ENCODE measurements at regions of chr14 and their contacts with region 1.

Region 1: DNA sequence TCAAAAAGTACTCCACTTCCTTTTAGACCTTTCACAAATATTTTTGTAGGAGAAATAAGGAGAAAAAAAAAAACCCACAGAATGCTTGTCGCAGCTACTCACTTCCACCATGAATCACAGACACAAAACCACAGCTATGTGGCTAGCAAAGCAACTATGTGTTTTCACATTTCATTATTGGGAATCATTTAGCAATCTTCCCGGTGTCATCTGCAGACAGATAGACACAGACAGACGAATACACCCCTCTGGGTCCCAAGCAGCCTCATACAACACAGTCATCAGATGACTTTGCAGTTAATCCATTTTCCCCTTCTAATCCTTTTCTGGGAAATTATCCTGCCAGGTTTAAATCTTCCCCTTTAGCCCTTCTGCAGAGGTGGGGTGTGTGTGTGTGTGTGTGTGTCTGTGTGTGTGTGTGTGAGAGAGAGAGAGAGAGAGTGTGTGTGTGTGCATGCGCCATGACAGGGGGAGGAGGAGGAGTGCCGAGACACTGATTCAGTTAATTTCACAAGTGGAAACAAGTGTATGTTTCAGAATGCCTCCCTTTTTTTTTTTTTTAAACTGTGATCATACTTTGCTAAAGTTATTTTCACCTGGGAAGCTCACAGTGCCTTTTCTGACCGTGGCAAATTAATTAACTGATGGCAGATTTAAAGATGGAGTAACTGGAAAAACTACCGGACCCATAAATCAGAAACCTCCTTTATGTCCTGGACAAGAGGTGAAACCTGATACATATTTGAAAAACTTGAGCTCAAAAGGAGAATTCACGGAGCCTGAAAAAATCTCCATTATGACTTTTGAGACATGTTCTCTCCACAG is 39.9 kb downstream of the LTBP2 start:
- DNase-seq: peak; percentile 87 to 100
- H3K4me3 ChIP-seq: peak overlapping the region; percentile 52
- H3K27ac ChIP-seq: peak overlapping the region; percentile 99
- H3K4me1 ChIP-seq: peaks cover 92% of the 10 kb centered on the region
- H3K27me3 ChIP-seq: no peaks in the 10 kb centered on the region
- CTCF ChIP-seq: no peak

Region 2: DNA sequence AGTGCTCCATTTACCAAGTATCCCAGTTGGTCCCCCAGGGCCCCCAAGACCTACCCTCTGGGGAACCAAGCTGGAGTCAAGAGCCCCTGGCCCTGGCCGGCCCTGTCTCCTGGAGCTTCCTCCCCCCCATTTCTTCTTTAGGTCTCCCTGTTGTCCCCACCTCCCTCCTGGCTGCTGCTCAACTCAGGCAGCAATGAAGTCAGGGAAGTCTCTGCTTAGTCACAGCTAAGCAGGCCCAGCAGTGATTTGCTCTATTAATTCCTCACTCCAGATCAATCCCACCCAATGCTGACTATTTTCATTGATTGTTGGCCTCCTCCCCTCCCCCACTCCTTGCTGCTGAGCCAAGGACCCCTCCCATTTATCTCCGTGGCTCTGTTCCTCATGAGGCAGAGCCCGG is 304.5 kb before region 1 on chr14:
- CTCF ChIA-PET with region 1: no interaction called
- POLR2A ChIA-PET with region 1: interaction called, 12 read pairs
- intact Hi-C with region 1: no loop called
- DNase-seq: no peak
- H3K4me3 ChIP-seq: no peak overlapping the region
- H3K27ac ChIP-seq: no peak overlapping the region
- H3K4me1 ChIP-seq: peaks cover 12% of the 10 kb centered on the region
- H3K27me3 ChIP-seq: no peaks in the 10 kb centered on the region
- CTCF ChIP-seq: no peak

Region 3: GRCh38 chr14:74514471-74514941 is 57.6 kb before region 1 on chr14:
- CTCF ChIA-PET with region 1: no interaction called
- POLR2A ChIA-PET with region 1: interaction called, 3 read pairs
- intact Hi-C with region 1: loop called (anchors 5 kb)
- DNase-seq: peak in 1 of 2 experiments; percentile 78
- H3K4me3 ChIP-seq: no peak overlapping the region
- H3K27ac ChIP-seq: no peak overlapping the region
- H3K4me1 ChIP-seq: peaks cover 8% of the 10 kb centered on the region
- H3K27me3 ChIP-seq: no peaks in the 10 kb centered on the region
- CTCF ChIP-seq: no peak

Region 4: DNA sequence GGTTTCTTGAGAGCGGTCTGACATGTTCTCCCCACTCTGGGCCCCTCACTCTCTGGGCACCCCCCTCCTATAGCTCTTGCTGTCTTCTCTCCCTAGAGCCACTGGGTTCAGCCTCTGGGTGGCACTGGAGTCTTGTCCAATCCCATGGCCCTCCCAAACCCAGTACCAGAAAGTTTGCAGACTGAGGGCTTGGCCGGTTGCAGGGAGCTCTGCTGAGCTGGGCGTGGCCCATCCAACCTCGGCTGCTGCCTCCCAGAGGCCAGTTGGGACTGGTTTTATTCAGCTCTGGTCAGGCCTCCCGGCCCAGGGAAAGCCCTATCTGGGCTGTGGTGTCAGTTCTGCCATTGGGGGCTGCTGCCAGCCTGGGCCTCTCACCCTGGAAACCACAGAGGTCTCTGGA is 40.6 kb before region 1 on chr14:
- CTCF ChIA-PET with region 1: no interaction called
- POLR2A ChIA-PET with region 1: no interaction called
- intact Hi-C with region 1: no loop called
- DNase-seq: peak in 1 of 2 experiments; percentile 35
- H3K4me3 ChIP-seq: no peak overlapping the region
- H3K27ac ChIP-seq: no peak overlapping the region
- H3K4me1 ChIP-seq: no peaks in the 10 kb centered on the region
- H3K27me3 ChIP-seq: no peaks in the 10 kb centered on the region
- CTCF ChIP-seq: no peak

Region 5: GRCh38 chr14:74634964-74635363 is 62.9 kb after region 1 on chr14:
- CTCF ChIA-PET with region 1: no interaction called
- POLR2A ChIA-PET with region 1: interaction called, 18 read pairs
- intact Hi-C with region 1: no loop called
- DNase-seq: no peak
- H3K4me3 ChIP-seq: no peak overlapping the region
- H3K27ac ChIP-seq: no peak overlapping the region
- H3K4me1 ChIP-seq: peaks cover 9% of the 10 kb centered on the region
- H3K27me3 ChIP-seq: no peaks in the 10 kb centered on the region
- CTCF ChIP-seq: no peak

Region 6: DNA sequence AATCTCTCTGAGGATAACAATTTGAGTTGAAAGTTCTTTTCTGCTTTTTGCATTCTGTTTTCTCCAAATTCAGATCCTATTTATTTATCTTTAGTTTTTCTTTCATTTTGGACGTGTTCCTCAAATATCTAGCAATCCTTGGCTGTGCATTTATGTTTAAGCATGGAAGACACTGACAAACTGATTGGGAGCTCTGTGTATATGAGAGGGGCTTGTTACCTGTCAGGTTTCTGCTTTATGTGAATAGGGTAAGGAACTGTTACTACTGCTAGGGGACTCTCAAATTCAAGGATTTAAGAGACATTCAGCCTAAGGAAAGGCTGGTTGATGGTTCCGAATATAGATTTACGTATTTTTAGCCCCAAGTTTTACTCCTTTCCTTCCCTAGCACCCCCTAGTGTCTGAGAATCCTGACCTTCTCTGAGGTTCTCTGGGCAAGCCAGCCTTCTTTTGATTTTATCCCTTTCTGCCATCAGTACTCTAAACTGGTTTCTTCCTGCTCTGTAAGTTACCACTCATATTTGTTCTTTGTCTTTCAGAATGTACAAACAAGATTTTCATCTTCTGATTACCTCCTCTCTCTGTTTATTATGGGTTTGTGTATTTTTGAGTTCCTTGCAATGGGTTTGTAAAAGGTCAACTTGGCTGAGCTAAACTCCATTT is 221.5 kb after region 1 on chr14:
- CTCF ChIA-PET with region 1: no interaction called
- POLR2A ChIA-PET with region 1: interaction called, 10 read pairs
- intact Hi-C with region 1: no loop called
- DNase-seq: no peak
- H3K4me3 ChIP-seq: no peak overlapping the region
- H3K27ac ChIP-seq: no peak overlapping the region
- H3K4me1 ChIP-seq: no peaks in the 10 kb centered on the region
- H3K27me3 ChIP-seq: no peaks in the 10 kb centered on the region
- CTCF ChIP-seq: peak; percentile 58; the same call in 1 of the 2 replicates

Region 7: GRCh38 chr14:75032939-75033338 is 460.8 kb after region 1 on chr14:
- CTCF ChIA-PET with region 1: no interaction called
- POLR2A ChIA-PET with region 1: no interaction called
- intact Hi-C with region 1: no loop called
- DNase-seq: no peak
- H3K4me3 ChIP-seq: no peak overlapping the region
- H3K27ac ChIP-seq: no peak overlapping the region
- H3K4me1 ChIP-seq: no peaks in the 10 kb centered on the region
- H3K27me3 ChIP-seq: no peaks in the 10 kb centered on the region
- CTCF ChIP-seq: no peak

Region 8: DNA sequence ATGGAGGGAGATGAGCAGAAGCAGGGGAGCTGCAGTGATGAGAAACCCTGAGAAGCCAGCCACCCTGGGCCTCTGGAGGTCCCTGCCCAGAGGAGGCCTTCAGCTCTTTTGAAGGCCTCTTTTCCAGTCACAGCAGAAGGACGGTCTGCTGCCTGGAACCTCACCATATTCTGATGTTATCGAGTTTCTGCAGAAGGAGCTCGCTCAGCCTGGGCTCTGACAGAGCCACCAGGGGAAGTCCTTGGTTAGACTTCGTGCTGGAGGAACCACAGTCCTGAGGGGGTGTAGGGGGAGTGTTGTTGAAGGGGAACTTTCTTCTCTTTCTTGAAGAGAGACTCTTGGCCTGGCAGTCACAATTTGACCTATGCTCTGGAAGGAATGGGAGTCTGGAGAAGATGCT is 925.1 kb after region 1 on chr14:
- CTCF ChIA-PET with region 1: interaction called, 13 read pairs
- POLR2A ChIA-PET with region 1: no interaction called
- intact Hi-C with region 1: no loop called
- DNase-seq: no peak
- H3K4me3 ChIP-seq: no peak overlapping the region
- H3K27ac ChIP-seq: no peak overlapping the region
- H3K4me1 ChIP-seq: peaks cover 4% of the 10 kb centered on the region; the same call in 1 of the 2 replicates
- H3K27me3 ChIP-seq: no peaks in the 10 kb centered on the region
- CTCF ChIP-seq: no peak

Measured in PC-9 (cell line).